SK-N-SH (cell line): ENCODE measurements at regions of chr20 and their contacts with region 1.

Region 1: GRCh38 chr20:57061058-57061900 is 205.2 kb downstream of the BMP7 start:
- DNase-seq: peak; percentile 70
- H3K4me3 ChIP-seq: peak overlapping the region in 1 of 2 experiments; percentile 43; a peak in 1 of 4 replicates
- H3K27ac ChIP-seq: no peak overlapping the region
- H3K4me1 ChIP-seq: no peaks in the 10 kb centered on the region
- H3K27me3 ChIP-seq: peaks cover 25% of the 10 kb centered on the region; the same call in 1 of the 2 replicates
- CTCF ChIP-seq: peak; percentile 45
- EP300 ChIP-seq: no peak
- RAD21 ChIP-seq: peak; percentile 67

Region 2: GRCh38 chr20:56685879-56686278 is 375.4 kb before region 1 on chr20:
- CTCF ChIA-PET with region 1: no interaction called
- POLR2A ChIA-PET with region 1: no interaction called
- DNase-seq: no peak
- H3K4me3 ChIP-seq: no peak overlapping the region
- H3K27ac ChIP-seq: no peak overlapping the region
- H3K4me1 ChIP-seq: no peaks in the 10 kb centered on the region
- H3K27me3 ChIP-seq: peaks cover 38% of the 10 kb centered on the region; the same call in 1 of the 2 replicates
- CTCF ChIP-seq: no peak
- EP300 ChIP-seq: no peak
- RAD21 ChIP-seq: no peak

Region 3: DNA sequence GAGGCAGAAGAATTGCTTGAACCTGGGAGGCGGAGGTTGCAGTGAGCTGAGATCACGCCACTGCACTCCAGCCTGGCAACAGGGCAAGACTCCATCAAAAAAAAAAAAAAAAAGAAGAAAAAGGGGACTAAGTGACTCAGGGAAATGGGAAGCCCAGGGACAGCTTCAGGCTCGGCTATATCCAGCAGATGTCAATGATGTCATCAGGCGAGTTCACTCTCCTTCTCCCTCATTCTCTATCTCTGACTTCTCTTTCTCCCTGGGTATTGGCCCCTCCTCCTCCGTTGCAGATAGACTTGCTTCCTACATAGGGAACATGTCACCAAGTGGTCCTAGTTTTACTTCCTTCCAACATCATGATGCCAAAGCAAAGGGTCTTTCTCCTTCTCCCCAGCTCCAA is 115.4 kb before region 1 on chr20:
- CTCF ChIA-PET with region 1: no interaction called
- POLR2A ChIA-PET with region 1: no interaction called
- DNase-seq: no peak
- H3K4me3 ChIP-seq: no peak overlapping the region
- H3K27ac ChIP-seq: no peak overlapping the region
- H3K4me1 ChIP-seq: no peaks in the 10 kb centered on the region
- H3K27me3 ChIP-seq: peaks cover 40% of the 10 kb centered on the region; the same call in 1 of the 2 replicates
- CTCF ChIP-seq: no peak
- EP300 ChIP-seq: no peak
- RAD21 ChIP-seq: no peak

Region 4: GRCh38 chr20:57071283-57071770 is 10.0 kb after region 1 on chr20:
- CTCF ChIA-PET with region 1: interaction called, 13 read pairs
- POLR2A ChIA-PET with region 1: no interaction called
- DNase-seq: no peak
- H3K4me3 ChIP-seq: peak overlapping the region in 1 of 2 experiments; percentile 4; a peak in 1 of 4 replicates
- H3K27ac ChIP-seq: no peak overlapping the region
- H3K4me1 ChIP-seq: peaks cover 0 to 2% of the 10 kb centered on the region in 2 experiments; a peak in 1 of 4 replicates
- H3K27me3 ChIP-seq: peaks cover 11% of the 10 kb centered on the region
- CTCF ChIP-seq: no peak
- EP300 ChIP-seq: no peak
- RAD21 ChIP-seq: no peak